ENCODE measurements at regions of chr7 and their contacts with region 1.

Region 1: GRCh38 chr7:118183786-118184564 is at the start of gene LSM8:
- DNase-seq: peak; percentile 91 to 99 (median 97)
- ATAC-seq: peak; percentile 98
- H3K4me3 ChIP-seq: peak within 1 kb of the TSS; percentile 77
- H3K4me3 Mint-ChIP-seq: peak within 1 kb of the TSS; percentile 92 to 99 (median 98)
- H3K27ac ChIP-seq: peak within 1 kb of the TSS; percentile 94
- H3K27ac Mint-ChIP-seq: peak within 1 kb of the TSS; percentile 98 to 100 (median 99)
- H3K4me1 ChIP-seq: peaks cover 21 to 31% of the 10 kb centered on the region in 2 donors
- H3K4me1 Mint-ChIP-seq: peaks cover 20 to 61% (median 56%) of the 10 kb centered on the region in 7 donors
- H3K27me3 ChIP-seq: no peaks in the 10 kb centered on the region
- H3K27me3 Mint-ChIP-seq: peaks cover 0 to 3% (median 0%) of the 10 kb centered on the region in 5 donors
- total RNA-seq, gene LSM8: 33.5 to 65.8 (median 50.3) TPM

Region 2: DNA sequence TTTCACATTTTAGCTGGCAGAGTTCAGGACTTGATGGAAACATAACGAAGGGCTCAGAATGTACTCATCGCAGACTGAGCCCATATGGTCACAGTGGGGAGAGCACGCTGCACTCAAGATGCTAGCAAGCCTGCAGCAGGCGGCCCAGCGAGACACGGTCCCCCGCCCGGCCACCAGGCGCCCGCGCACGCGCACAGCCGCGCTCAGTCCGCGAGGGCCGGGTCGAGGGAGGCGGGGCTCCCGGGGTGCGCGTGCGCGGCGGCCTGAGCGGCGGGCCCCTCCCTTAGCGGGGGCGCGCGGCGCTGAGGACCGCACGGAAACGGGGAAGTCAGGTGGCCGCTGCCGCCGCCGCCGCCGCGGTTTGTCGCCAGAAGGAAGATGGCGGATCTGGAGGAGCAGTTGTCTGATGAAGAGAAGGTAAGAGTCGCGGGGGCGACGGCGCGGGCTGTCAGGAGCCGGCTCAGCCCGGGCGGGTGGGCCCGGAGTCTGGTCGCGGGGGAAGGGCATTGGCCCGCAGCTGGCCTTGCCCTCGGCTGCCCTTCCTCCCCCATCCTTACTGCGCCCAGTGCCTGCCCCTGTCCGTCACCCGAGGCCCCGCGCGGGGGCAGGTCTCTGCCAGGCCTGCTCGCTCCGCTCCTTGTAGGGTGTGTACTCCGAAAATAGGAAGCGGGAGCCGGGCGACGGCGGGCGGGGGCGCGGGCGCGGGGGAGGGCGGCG is 1321.6 kb before region 1 on chr7 and contains the start of gene CAPZA2:
- CTCF ChIA-PET with region 1: no interaction called
- POLR2A ChIA-PET with region 1: no interaction called
- intact Hi-C with region 1: loop called (anchors 1 to 5 kb)
- DNase-seq: peak; percentile 89 to 99 (median 96)
- ATAC-seq: peak; percentile 96
- H3K4me3 ChIP-seq: peak within 1 kb of the TSS; percentile 73
- H3K4me3 Mint-ChIP-seq: peak within 1 kb of the TSS; percentile 94 to 99 (median 97)
- H3K27ac ChIP-seq: peak within 1 kb of the TSS; percentile 91
- H3K27ac Mint-ChIP-seq: peak within 1 kb of the TSS; percentile 91 to 99 (median 96)
- H3K4me1 ChIP-seq: peaks cover 11 to 28% of the 10 kb centered on the region in 2 donors
- H3K4me1 Mint-ChIP-seq: peaks cover 29 to 49% (median 46%) of the 10 kb centered on the region in 7 donors
- H3K27me3 ChIP-seq: no peaks in the 10 kb centered on the region
- H3K27me3 Mint-ChIP-seq: peaks cover 4 to 26% (median 8%) of the 10 kb centered on the region in 5 donors
- total RNA-seq, gene CAPZA2: 86.2 to 129 (median 111) TPM

Region 3: DNA sequence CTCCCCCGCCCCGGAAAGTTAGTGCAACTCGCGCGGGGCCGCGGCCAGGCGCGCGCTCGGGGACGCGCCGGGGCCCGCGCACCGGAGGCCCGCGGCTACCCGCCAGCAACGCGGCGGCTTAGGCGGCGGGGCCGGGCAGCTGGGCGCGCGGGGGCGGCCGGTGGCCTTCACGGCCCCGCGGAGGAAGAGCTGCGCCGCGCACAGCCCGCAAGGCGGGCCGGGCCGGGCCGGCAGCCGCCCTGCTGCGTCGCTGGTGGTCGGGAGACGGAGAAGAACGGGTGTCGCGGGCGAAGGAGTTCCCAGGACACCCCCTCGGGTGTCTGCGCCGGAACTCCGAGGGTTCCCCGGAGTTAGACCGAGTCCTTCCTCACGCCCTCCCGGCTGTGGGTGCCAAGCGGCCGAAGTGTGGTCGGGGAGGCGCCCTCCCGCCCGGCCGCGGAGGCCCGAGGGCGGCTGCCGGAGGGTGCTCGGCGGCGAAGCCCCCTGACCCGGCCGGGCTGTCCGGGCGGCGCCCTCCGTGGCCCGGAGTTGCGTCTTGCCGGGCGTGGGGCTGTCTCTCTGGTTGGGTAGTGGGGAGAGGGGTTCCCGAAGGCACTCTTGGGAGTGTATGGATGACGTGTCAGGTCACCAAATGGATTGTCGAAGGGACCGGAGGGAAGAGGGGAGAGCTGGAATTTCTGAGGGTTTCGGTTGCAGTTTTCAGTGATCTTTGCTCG is 1230.1 kb before region 1 on chr7:
- CTCF ChIA-PET with region 1: no interaction called
- POLR2A ChIA-PET with region 1: no interaction called
- intact Hi-C with region 1: loop called in 1 of 2 experiments (anchors 5 kb)
- DNase-seq: peak in 4 of 9 donors; percentile 7 to 64 (median 36)
- ATAC-seq: peak; percentile 87
- H3K4me3 ChIP-seq: peak overlapping the region; percentile 79
- H3K4me3 Mint-ChIP-seq: peak overlapping the region; percentile 86 to 96 (median 94)
- H3K27ac ChIP-seq: peak overlapping the region; percentile 64
- H3K27ac Mint-ChIP-seq: peak overlapping the region; percentile 66 to 95 (median 88)
- H3K4me1 ChIP-seq: peaks cover 7 to 8% of the 10 kb centered on the region in 2 donors
- H3K4me1 Mint-ChIP-seq: peaks cover 13 to 25% (median 22%) of the 10 kb centered on the region in 7 donors
- H3K27me3 ChIP-seq: no peaks in the 10 kb centered on the region
- H3K27me3 Mint-ChIP-seq: peaks cover 0 to 24% (median 0%) of the 10 kb centered on the region in 5 donors

Region 4: GRCh38 chr7:117014673-117015133 is 1169.3 kb before region 1 on chr7:
- CTCF ChIA-PET with region 1: no interaction called
- POLR2A ChIA-PET with region 1: no interaction called
- intact Hi-C with region 1: loop called in 1 of 2 experiments (anchors 5 kb)
- DNase-seq: no peak
- ATAC-seq: peak; percentile 74
- H3K4me3 ChIP-seq: no peak overlapping the region
- H3K4me3 Mint-ChIP-seq: peak overlapping the region in 3 of 10 donors; percentile 1 to 45 (median 35)
- H3K27ac ChIP-seq: no peak overlapping the region
- H3K27ac Mint-ChIP-seq: no peak overlapping the region
- H3K4me1 ChIP-seq: peaks cover 9 to 21% of the 10 kb centered on the region in 2 donors
- H3K4me1 Mint-ChIP-seq: peaks cover 23 to 41% (median 33%) of the 10 kb centered on the region in 7 donors
- H3K27me3 ChIP-seq: no peaks in the 10 kb centered on the region
- H3K27me3 Mint-ChIP-seq: peaks cover 0 to 53% (median 0%) of the 10 kb centered on the region in 5 donors

Region 5: GRCh38 chr7:118080947-118081346 is 103.0 kb before region 1 on chr7:
- CTCF ChIA-PET with region 1: no interaction called
- POLR2A ChIA-PET with region 1: no interaction called
- intact Hi-C with region 1: loop called in 1 of 2 experiments (anchors 5 kb)
- DNase-seq: peak in 1 of 9 donors; percentile 61
- ATAC-seq: no peak
- H3K4me3 ChIP-seq: no peak overlapping the region
- H3K4me3 Mint-ChIP-seq: no peak overlapping the region
- H3K27ac ChIP-seq: no peak overlapping the region
- H3K27ac Mint-ChIP-seq: peak overlapping the region in 1 of 9 donors; percentile 14
- H3K4me1 ChIP-seq: no peaks in the 10 kb centered on the region
- H3K4me1 Mint-ChIP-seq: peaks cover 0 to 14% (median 0%) of the 10 kb centered on the region in 7 donors
- H3K27me3 ChIP-seq: no peaks in the 10 kb centered on the region
- H3K27me3 Mint-ChIP-seq: peaks cover 0 to 30% (median 19%) of the 10 kb centered on the region in 5 donors

Region 6: GRCh38 chr7:118195837-118196474 is 12.0 kb after region 1 on chr7:
- CTCF ChIA-PET with region 1: interaction called, 3 read pairs
- POLR2A ChIA-PET with region 1: no interaction called
- intact Hi-C with region 1: loop called (anchors 1 kb)
- DNase-seq: peak in 8 of 9 donors; percentile 14 to 56 (median 43)
- ATAC-seq: peak; percentile 86
- H3K4me3 ChIP-seq: no peak overlapping the region
- H3K4me3 Mint-ChIP-seq: no peak overlapping the region
- H3K27ac ChIP-seq: no peak overlapping the region
- H3K27ac Mint-ChIP-seq: peak overlapping the region in 6 of 9 donors; percentile 1 to 81 (median 40)
- H3K4me1 ChIP-seq: no peaks in the 10 kb centered on the region
- H3K4me1 Mint-ChIP-seq: peaks cover 0 to 12% (median 5%) of the 10 kb centered on the region in 7 donors
- H3K27me3 ChIP-seq: no peaks in the 10 kb centered on the region
- H3K27me3 Mint-ChIP-seq: no peaks in the 10 kb centered on the region

Region 7: GRCh38 chr7:118214051-118214832 is 30.3 kb after region 1 on chr7:
- CTCF ChIA-PET with region 1: no interaction called
- POLR2A ChIA-PET with region 1: interaction called, 3 read pairs
- intact Hi-C with region 1: loop called in 1 of 2 experiments (anchors 1 kb)
- DNase-seq: peak; percentile 45 to 85 (median 57)
- ATAC-seq: peak; percentile 85
- H3K4me3 ChIP-seq: peak overlapping the region; percentile 62
- H3K4me3 Mint-ChIP-seq: peak overlapping the region; percentile 73 to 93 (median 90)
- H3K27ac ChIP-seq: peak overlapping the region; percentile 38
- H3K27ac Mint-ChIP-seq: peak overlapping the region in 8 of 9 donors; percentile 53 to 94 (median 82)
- H3K4me1 ChIP-seq: peaks cover 3 to 4% of the 10 kb centered on the region in 2 donors
- H3K4me1 Mint-ChIP-seq: peaks cover 8 to 19% (median 12%) of the 10 kb centered on the region in 7 donors
- H3K27me3 ChIP-seq: no peaks in the 10 kb centered on the region
- H3K27me3 Mint-ChIP-seq: peaks cover 6 to 45% (median 20%) of the 10 kb centered on the region in 5 donors

Region 8: GRCh38 chr7:118389629-118390028 is 205.7 kb after region 1 on chr7:
- CTCF ChIA-PET with region 1: no interaction called
- POLR2A ChIA-PET with region 1: no interaction called
- intact Hi-C with region 1: no loop called
- DNase-seq: no peak
- ATAC-seq: no peak
- H3K4me3 ChIP-seq: no peak overlapping the region
- H3K4me3 Mint-ChIP-seq: no peak overlapping the region
- H3K27ac ChIP-seq: no peak overlapping the region
- H3K27ac Mint-ChIP-seq: no peak overlapping the region
- H3K4me1 ChIP-seq: no peaks in the 10 kb centered on the region
- H3K4me1 Mint-ChIP-seq: no peaks in the 10 kb centered on the region
- H3K27me3 ChIP-seq: no peaks in the 10 kb centered on the region
- H3K27me3 Mint-ChIP-seq: no peaks in the 10 kb centered on the region

Measured in naive thymus-derived CD4-positive, alpha-beta T cell (primary cell).